ENCODE measurements at regions of chr17 and their contacts with region 1.

Region 1: GRCh38 chr17:40417609-40418427 is at the start of gene TOP2A:
- DNase-seq: peak; percentile 92 to 98 (median 98)
- ATAC-seq: peak; percentile 100
- H3K4me3 ChIP-seq: peak within 1 kb of the TSS; percentile 96
- H3K4me3 Mint-ChIP-seq: peak within 1 kb of the TSS; percentile 87 to 99 (median 92)
- H3K27ac ChIP-seq: peak within 1 kb of the TSS; percentile 71
- H3K27ac Mint-ChIP-seq: peak within 1 kb of the TSS; percentile 75 to 97 (median 90)
- H3K4me1 ChIP-seq: peaks cover 0 to 16% of the 10 kb centered on the region in 2 donors
- H3K4me1 Mint-ChIP-seq: peaks cover 6 to 41% (median 23%) of the 10 kb centered on the region in 7 donors
- H3K27me3 ChIP-seq: peaks cover 0 to 5% of the 10 kb centered on the region in 2 donors
- H3K27me3 Mint-ChIP-seq: peaks cover 0 to 2% (median 0%) of the 10 kb centered on the region in 5 donors
- total RNA-seq, gene TOP2A: 0.54 to 273 (median 1.2) TPM

Region 2: GRCh38 chr17:40219073-40219860 is 198.6 kb before region 1 on chr17 and contains the start of gene WIPF2:
- CTCF ChIA-PET with region 1: no interaction called
- POLR2A ChIA-PET with region 1: no interaction called
- intact Hi-C with region 1: loop called in 1 of 2 experiments (anchors 5 kb)
- DNase-seq: peak; percentile 88 to 97 (median 95)
- ATAC-seq: peak; percentile 96
- H3K4me3 ChIP-seq: peak within 1 kb of the TSS; percentile 74
- H3K4me3 Mint-ChIP-seq: peak within 1 kb of the TSS; percentile 86 to 100 (median 96)
- H3K27ac ChIP-seq: peak within 1 kb of the TSS; percentile 92
- H3K27ac Mint-ChIP-seq: peak within 1 kb of the TSS; percentile 96 to 100 (median 100)
- H3K4me1 ChIP-seq: peaks cover 9 to 10% of the 10 kb centered on the region in 2 donors
- H3K4me1 Mint-ChIP-seq: peaks cover 25 to 44% (median 32%) of the 10 kb centered on the region in 7 donors
- H3K27me3 ChIP-seq: no peaks in the 10 kb centered on the region
- H3K27me3 Mint-ChIP-seq: no peaks in the 10 kb centered on the region
- total RNA-seq, gene WIPF2: 24.8 to 31.8 (median 28.6) TPM

Region 3: DNA sequence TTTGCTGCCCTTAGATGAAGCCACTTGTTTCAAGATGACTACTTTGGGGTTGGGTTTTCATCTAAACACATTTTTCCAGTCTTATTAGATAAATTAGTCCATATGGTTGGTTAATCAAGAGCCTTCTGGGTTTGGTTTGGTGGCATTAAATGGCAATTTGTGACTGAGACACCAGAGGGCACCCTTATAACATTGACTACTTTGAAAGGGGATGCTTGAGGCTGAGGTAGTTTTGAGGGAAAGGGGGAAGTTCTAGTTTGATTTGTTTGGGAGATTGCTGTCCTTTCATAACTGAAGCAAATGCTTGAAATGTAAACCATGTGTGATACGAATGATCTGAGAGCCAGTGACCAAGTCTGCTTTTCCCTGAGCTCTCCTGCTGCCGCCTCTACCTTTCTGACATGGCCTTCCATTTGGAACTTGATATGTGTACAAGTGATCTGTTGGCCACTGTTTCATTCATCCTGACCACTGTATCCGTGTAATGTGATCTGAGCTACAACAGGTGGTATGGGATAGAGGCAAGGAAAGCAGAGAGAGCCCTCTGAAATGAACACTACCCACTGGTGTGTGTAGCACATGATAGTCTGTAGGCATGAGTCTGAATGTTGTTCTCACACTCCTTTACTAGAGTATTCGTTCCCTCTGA is 114.7 kb before region 1 on chr17:
- CTCF ChIA-PET with region 1: interaction called, 5 read pairs
- POLR2A ChIA-PET with region 1: no interaction called
- intact Hi-C with region 1: loop called in 1 of 2 experiments (anchors 1 kb)
- DNase-seq: peak in 7 of 9 donors; percentile 43 to 70 (median 64)
- ATAC-seq: peak; percentile 86
- H3K4me3 ChIP-seq: no peak overlapping the region
- H3K4me3 Mint-ChIP-seq: peak overlapping the region in 2 of 10 donors; percentile 8 to 44
- H3K27ac ChIP-seq: no peak overlapping the region
- H3K27ac Mint-ChIP-seq: peak overlapping the region in 7 of 9 donors; percentile 3 to 34 (median 19)
- H3K4me1 ChIP-seq: peaks cover 13 to 28% of the 10 kb centered on the region in 2 donors
- H3K4me1 Mint-ChIP-seq: peaks cover 11 to 21% (median 15%) of the 10 kb centered on the region in 7 donors
- H3K27me3 ChIP-seq: no peaks in the 10 kb centered on the region
- H3K27me3 Mint-ChIP-seq: no peaks in the 10 kb centered on the region

Region 4: DNA sequence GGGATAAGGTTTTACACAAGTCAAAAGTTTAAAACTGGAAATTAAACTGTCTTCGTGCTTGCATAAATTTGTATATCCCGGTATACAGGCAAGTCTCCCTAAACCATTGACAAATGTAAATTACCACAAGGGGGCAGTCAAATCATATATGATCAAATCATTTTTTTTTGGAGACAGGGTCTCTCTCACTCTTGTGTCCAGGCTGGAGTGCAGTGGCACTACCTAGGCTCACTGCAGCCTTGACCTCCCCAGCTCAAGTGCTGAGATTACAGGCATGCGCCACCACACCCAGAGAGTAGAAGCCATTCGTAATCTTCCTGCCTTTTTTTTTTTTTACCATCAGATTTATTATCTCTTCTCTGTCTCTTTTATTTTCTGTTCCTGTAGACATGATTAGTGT is 18.6 kb before region 1 on chr17:
- CTCF ChIA-PET with region 1: interaction called, 8 read pairs
- POLR2A ChIA-PET with region 1: interaction called, 5 read pairs
- intact Hi-C with region 1: loop called (anchors 1 kb)
- DNase-seq: peak in 6 of 9 donors; percentile 39 to 69 (median 60)
- ATAC-seq: peak; percentile 75
- H3K4me3 ChIP-seq: no peak overlapping the region
- H3K4me3 Mint-ChIP-seq: no peak overlapping the region
- H3K27ac ChIP-seq: no peak overlapping the region
- H3K27ac Mint-ChIP-seq: peak overlapping the region in 3 of 9 donors; percentile 6 to 65 (median 64)
- H3K4me1 ChIP-seq: no peaks in the 10 kb centered on the region
- H3K4me1 Mint-ChIP-seq: peaks cover 8 to 36% (median 22%) of the 10 kb centered on the region in 7 donors
- H3K27me3 ChIP-seq: no peaks in the 10 kb centered on the region
- H3K27me3 Mint-ChIP-seq: no peaks in the 10 kb centered on the region

Region 5: GRCh38 chr17:40443583-40444327 is 25.9 kb after region 1 on chr17:
- CTCF ChIA-PET with region 1: interaction called, 4 read pairs
- POLR2A ChIA-PET with region 1: interaction called, 3 read pairs
- intact Hi-C with region 1: loop called in 1 of 2 experiments (anchors 2 kb)
- DNase-seq: peak; percentile 40 to 80 (median 61)
- ATAC-seq: peak; percentile 87
- H3K4me3 ChIP-seq: peak overlapping the region; percentile 21
- H3K4me3 Mint-ChIP-seq: peak overlapping the region; percentile 65 to 90 (median 84)
- H3K27ac ChIP-seq: peak overlapping the region; percentile 1
- H3K27ac Mint-ChIP-seq: peak overlapping the region in 8 of 9 donors; percentile 60 to 93 (median 78)
- H3K4me1 ChIP-seq: peaks cover 25 to 27% of the 10 kb centered on the region in 2 donors
- H3K4me1 Mint-ChIP-seq: peaks cover 30 to 58% (median 33%) of the 10 kb centered on the region in 7 donors
- H3K27me3 ChIP-seq: no peaks in the 10 kb centered on the region
- H3K27me3 Mint-ChIP-seq: peaks cover 0 to 5% (median 0%) of the 10 kb centered on the region in 5 donors